ENCODE measurements at regions of chr10 and their contacts with region 1.

Region 1: GRCh38 chr10:5623081-5623748 is 43.2 kb downstream of the ASB13 start:
- DNase-seq: peak; percentile 85
- H3K4me3 Mint-ChIP-seq: no peak overlapping the region
- H3K27ac Mint-ChIP-seq: no peak overlapping the region
- H3K4me1 Mint-ChIP-seq: peaks cover 14% of the 10 kb centered on the region
- H3K27me3 Mint-ChIP-seq: peaks cover 5% of the 10 kb centered on the region

Region 2: GRCh38 chr10:4981722-4982471 is 641.3 kb before region 1 on chr10:
- CTCF ChIA-PET with region 1: no interaction called
- POLR2A ChIA-PET with region 1: no interaction called
- DNase-seq: no peak
- H3K4me3 Mint-ChIP-seq: no peak overlapping the region
- H3K27ac Mint-ChIP-seq: no peak overlapping the region
- H3K4me1 Mint-ChIP-seq: no peaks in the 10 kb centered on the region
- H3K27me3 Mint-ChIP-seq: no peaks in the 10 kb centered on the region

Region 3: GRCh38 chr10:5343562-5343961 is 279.7 kb before region 1 on chr10:
- CTCF ChIA-PET with region 1: no interaction called
- POLR2A ChIA-PET with region 1: no interaction called
- DNase-seq: peak; percentile 28
- H3K4me3 Mint-ChIP-seq: no peak overlapping the region
- H3K27ac Mint-ChIP-seq: no peak overlapping the region
- H3K4me1 Mint-ChIP-seq: peaks cover 5% of the 10 kb centered on the region
- H3K27me3 Mint-ChIP-seq: no peaks in the 10 kb centered on the region

Region 4: GRCh38 chr10:5434017-5434753 is 189.0 kb before region 1 on chr10:
- CTCF ChIA-PET with region 1: interaction called, 33 read pairs
- POLR2A ChIA-PET with region 1: no interaction called
- DNase-seq: no peak
- H3K4me3 Mint-ChIP-seq: no peak overlapping the region
- H3K27ac Mint-ChIP-seq: no peak overlapping the region
- H3K4me1 Mint-ChIP-seq: peaks cover 14% of the 10 kb centered on the region
- H3K27me3 Mint-ChIP-seq: no peaks in the 10 kb centered on the region

Region 5: GRCh38 chr10:5484205-5484604 is 139.0 kb before region 1 on chr10:
- CTCF ChIA-PET with region 1: no interaction called
- POLR2A ChIA-PET with region 1: no interaction called
- DNase-seq: no peak
- H3K4me3 Mint-ChIP-seq: no peak overlapping the region
- H3K27ac Mint-ChIP-seq: no peak overlapping the region
- H3K4me1 Mint-ChIP-seq: no peaks in the 10 kb centered on the region
- H3K27me3 Mint-ChIP-seq: peaks cover 2% of the 10 kb centered on the region

Region 6: DNA sequence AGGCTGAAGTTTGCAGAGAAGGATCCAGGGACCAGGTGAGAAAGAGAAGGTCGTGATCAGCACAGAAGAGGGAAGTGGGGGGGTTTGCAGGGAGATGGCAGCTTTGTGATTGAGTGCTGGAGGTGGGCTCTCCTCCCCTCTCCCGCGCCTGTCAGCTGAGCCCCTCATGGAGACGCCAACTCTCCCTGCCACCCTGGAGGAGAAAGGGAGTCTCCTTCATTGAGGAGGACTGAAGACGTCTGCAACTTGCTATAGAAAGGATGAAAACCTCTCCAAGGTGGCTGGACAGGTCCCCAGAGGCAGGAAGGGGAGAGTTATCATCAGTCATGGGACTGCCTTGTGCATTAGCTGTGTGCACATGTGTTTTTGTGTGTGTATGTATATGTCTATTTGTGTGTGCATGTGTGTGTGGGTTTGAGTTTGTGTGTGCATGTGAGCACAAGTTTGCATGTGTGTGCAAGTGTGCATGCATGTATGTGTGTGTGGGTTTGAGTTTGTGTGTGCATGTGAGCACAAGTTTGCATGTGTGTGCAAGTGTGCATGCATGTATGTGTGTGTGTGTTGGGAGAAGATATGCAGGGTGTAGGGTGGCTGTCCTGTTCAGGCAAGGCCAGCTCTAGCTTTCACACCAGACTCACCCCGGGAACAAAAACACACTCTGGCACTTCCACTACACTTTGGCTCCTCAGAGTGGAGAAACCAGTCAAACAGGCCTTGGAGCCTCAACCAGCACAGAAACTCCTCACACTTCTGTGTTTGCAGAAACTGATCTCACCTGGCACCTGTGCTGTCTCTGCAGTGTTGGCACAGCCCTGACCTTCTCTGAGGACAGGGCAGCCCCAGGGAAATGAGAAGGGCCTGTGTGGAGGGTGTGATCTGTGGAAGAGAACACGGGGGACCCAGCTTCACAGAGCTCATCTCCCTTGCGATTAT is 120.0 kb before region 1 on chr10:
- CTCF ChIA-PET with region 1: interaction called, 17 read pairs
- POLR2A ChIA-PET with region 1: no interaction called
- DNase-seq: no peak
- H3K4me3 Mint-ChIP-seq: no peak overlapping the region
- H3K27ac Mint-ChIP-seq: no peak overlapping the region
- H3K4me1 Mint-ChIP-seq: no peaks in the 10 kb centered on the region
- H3K27me3 Mint-ChIP-seq: peaks cover 23% of the 10 kb centered on the region

Region 7: DNA sequence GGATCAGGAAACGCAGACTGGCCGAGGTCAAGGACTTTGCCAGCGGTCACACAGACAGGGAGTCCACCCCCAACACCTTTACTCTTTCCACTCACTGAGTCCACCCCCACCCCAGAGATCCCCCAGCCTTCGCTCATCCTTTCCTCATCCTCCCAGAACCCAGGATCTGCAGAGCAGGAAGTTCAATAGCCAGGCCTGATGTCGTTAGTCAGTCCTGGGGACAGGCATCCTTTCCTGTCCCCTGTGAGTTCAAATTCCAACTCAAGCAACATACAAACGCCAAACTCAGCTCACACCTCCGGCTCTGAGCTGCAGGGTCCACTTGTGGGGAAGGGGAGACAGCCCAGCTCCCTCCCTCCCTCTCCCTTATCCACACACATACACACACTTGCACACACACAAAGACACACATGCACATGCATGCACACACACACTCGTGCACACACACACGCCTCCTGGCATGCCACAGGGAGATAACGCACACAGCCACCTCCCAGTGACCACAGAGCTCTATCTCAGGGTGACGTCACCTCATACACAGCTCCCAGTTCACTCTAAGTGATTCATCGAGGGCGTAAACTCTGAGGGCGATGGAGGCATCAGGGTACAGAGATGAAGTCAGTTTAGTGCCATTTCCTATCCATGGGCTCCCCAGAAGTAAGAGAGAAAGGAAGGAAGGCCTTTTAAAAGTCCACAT is 74.5 kb before region 1 on chr10:
- CTCF ChIA-PET with region 1: interaction called, 18 read pairs
- POLR2A ChIA-PET with region 1: interaction called, 8 read pairs
- DNase-seq: peak; percentile 78
- H3K4me3 Mint-ChIP-seq: no peak overlapping the region
- H3K27ac Mint-ChIP-seq: no peak overlapping the region
- H3K4me1 Mint-ChIP-seq: peaks cover 28% of the 10 kb centered on the region
- H3K27me3 Mint-ChIP-seq: peaks cover 14% of the 10 kb centered on the region

Region 8: GRCh38 chr10:5654218-5654755 is 31.1 kb after region 1 on chr10:
- CTCF ChIA-PET with region 1: no interaction called
- POLR2A ChIA-PET with region 1: no interaction called
- DNase-seq: no peak
- H3K4me3 Mint-ChIP-seq: no peak overlapping the region
- H3K27ac Mint-ChIP-seq: no peak overlapping the region
- H3K4me1 Mint-ChIP-seq: peaks cover 32% of the 10 kb centered on the region
- H3K27me3 Mint-ChIP-seq: no peaks in the 10 kb centered on the region

Measured in activated CD4-positive, alpha-beta memory T cell treated with anti-CD3 and anti-CD28 coated beads, Interleukin-2, amount 10 ng/mL, durations not matched to agents 7 days and 5 days (primary cell).